Caco-2 (cell line): ENCODE measurements at regions of chr21 and their contacts with region 1.

Region 1: DNA sequence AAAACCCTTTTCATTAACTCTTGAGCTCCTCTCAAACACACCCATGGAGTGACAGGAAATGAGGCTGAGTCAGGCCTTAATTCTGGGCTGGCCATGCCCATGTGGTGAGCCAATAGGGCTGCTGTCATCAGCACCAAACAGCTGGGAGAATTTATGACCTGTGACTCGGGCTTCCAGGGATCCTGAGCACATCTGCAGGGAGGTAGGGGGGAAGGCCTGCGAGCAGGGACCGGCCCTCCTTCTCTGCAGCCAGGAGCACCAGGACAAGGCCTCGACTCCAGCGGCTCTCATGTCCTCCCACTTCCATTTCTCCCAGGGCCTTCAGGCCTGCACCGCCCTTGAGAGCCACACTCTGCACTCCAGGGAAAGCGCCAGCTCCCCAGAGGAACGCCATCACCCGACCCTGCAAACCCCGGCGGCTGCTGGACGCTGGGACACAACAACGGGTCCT is 14.6 kb downstream of the RIPK4 start:
- DNase-seq: no peak
- H3K4me3 ChIP-seq: no peak overlapping the region
- H3K4me3 Mint-ChIP-seq: peak overlapping the region; percentile 1
- H3K27ac Mint-ChIP-seq: peak overlapping the region; percentile 39
- H3K4me1 ChIP-seq: peaks cover 39% of the 10 kb centered on the region
- H3K4me1 Mint-ChIP-seq: peaks cover 28% of the 10 kb centered on the region
- H3K27me3 ChIP-seq: no peaks in the 10 kb centered on the region
- H3K27me3 Mint-ChIP-seq: no peaks in the 10 kb centered on the region
- CTCF ChIP-seq: no peak

Region 2: DNA sequence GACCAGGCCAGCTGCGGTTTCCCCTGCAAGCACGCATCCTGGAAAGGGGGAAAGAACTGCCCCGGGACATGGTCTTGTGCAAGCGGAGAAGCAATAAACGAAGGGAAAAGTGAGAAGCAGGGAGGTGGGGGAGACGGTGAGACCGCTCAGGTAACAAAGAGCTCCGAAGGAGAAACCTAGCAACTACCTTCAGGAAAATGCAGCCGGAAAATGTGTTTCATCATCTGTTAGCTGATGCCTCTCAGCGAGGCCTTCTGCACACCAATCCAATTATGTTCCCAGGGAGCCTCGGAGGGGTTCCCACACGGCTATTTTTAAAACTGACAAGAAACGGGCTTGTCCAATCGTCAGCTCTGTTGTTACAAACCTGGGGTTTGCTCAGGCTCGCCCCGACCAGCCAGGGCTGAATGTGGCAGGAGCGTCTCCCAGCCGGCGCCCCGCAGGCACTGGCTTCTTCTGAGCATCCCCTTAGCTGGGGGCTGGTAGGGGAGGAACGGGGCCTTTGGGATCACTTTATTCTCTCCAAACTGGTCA is 11.2 kb after region 1 on chr21:
- CTCF ChIA-PET with region 1: interaction called, 10 read pairs
- POLR2A ChIA-PET with region 1: interaction called, 5 read pairs
- intact Hi-C with region 1: loop called (anchors 1 kb)
- DNase-seq: no peak
- H3K4me3 ChIP-seq: no peak overlapping the region
- H3K4me3 Mint-ChIP-seq: peak overlapping the region; percentile 37
- H3K27ac Mint-ChIP-seq: peak overlapping the region; percentile 79
- H3K4me1 ChIP-seq: peaks cover 45% of the 10 kb centered on the region
- H3K4me1 Mint-ChIP-seq: peaks cover 45% of the 10 kb centered on the region
- H3K27me3 ChIP-seq: no peaks in the 10 kb centered on the region
- H3K27me3 Mint-ChIP-seq: no peaks in the 10 kb centered on the region
- CTCF ChIP-seq: no peak

Region 3: DNA sequence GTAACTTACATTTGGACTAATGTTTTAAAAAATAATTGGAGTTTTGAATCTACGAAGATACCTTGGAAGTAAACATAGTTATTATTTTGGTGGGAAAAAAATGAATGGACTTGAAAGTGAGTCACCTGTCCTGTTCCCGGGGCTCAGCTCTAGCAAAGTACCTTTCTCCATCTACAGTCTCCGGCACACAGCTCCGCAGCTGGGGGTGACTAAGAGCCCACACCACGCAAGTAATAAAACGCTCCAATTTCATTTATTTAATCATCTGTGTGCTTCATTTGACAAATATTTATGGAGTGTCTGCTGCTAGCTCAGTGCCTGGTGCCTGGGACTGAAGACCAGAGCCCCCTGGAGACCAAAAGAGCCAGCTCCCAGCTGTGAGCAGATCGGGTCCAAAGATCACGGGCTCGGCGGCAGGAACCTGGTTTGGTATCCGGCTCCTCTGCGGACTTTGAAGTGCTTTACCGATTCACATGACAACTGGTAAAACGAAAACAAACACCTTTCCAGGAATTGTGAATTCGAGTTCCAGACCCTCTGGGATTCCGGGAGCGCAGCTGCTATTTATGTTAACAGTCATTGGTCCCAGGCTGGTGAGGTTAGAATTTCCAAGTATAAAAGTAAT is 16.3 kb after region 1 on chr21:
- CTCF ChIA-PET with region 1: interaction called, 10 read pairs
- POLR2A ChIA-PET with region 1: interaction called, 5 read pairs
- intact Hi-C with region 1: loop called (anchors 1 kb)
- DNase-seq: peak; percentile 91 to 93
- H3K4me3 ChIP-seq: peak overlapping the region; percentile 90
- H3K4me3 Mint-ChIP-seq: peak overlapping the region; percentile 90
- H3K27ac Mint-ChIP-seq: peak overlapping the region; percentile 94
- H3K4me1 ChIP-seq: peaks cover 40% of the 10 kb centered on the region
- H3K4me1 Mint-ChIP-seq: peaks cover 64% of the 10 kb centered on the region
- H3K27me3 ChIP-seq: no peaks in the 10 kb centered on the region
- H3K27me3 Mint-ChIP-seq: no peaks in the 10 kb centered on the region
- CTCF ChIP-seq: peak; percentile 41 to 68

Region 4: GRCh38 chr21:41777951-41778874 is 26.0 kb after region 1 on chr21:
- CTCF ChIA-PET with region 1: no interaction called
- POLR2A ChIA-PET with region 1: no interaction called
- intact Hi-C with region 1: loop called (anchors 1 kb)
- DNase-seq: peak; percentile 90 to 92
- H3K4me3 ChIP-seq: no peak overlapping the region
- H3K4me3 Mint-ChIP-seq: peak overlapping the region; percentile 35
- H3K27ac Mint-ChIP-seq: no peak overlapping the region
- H3K4me1 ChIP-seq: peaks cover 19% of the 10 kb centered on the region
- H3K4me1 Mint-ChIP-seq: peaks cover 26% of the 10 kb centered on the region
- H3K27me3 ChIP-seq: no peaks in the 10 kb centered on the region
- H3K27me3 Mint-ChIP-seq: no peaks in the 10 kb centered on the region
- CTCF ChIP-seq: peak; percentile 88 to 89